Mammary epithelial cell (primary cell): ENCODE measurements at regions of chr9 and their contacts with region 1.

Region 1: GRCh38 chr9:94076557-94076956 is 7.7 kb upstream of the PTPDC1 start:
- DNase-seq: no peak
- H3K4me3 ChIP-seq: no peak overlapping the region
- H3K27ac ChIP-seq: no peak overlapping the region
- H3K4me1 ChIP-seq: no peaks in the 10 kb centered on the region
- H3K27me3 ChIP-seq: no peaks in the 10 kb centered on the region
- CTCF ChIP-seq: no peak

Region 2: DNA sequence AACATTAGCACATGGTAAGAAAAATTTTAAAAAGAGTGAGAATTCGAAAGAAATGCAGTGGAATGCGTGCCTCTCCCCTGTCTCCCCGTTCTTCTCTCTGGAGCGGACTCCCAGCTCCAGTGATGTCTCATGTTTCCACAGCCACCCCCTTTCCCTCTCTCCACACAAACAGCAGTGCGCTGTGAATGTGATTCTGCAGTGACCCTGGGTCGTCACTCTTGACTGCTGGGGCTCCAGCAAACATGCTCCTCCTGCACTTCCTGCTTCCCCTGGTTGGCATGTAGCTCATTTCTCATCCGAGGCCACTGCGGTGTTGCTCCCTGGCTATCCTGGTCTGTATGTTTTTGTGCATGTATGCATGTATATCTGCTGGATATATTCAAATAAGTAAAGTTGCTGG is 486.9 kb before region 1 on chr9:
- CTCF ChIA-PET with region 1: no interaction called
- dilution Hi-C with region 1: no loop called
- in situ Hi-C with region 1: no loop called
- intact Hi-C with region 1: no loop called
- DNase-seq: no peak
- H3K4me3 ChIP-seq: no peak overlapping the region
- H3K27ac ChIP-seq: no peak overlapping the region
- H3K4me1 ChIP-seq: peaks cover 9% of the 10 kb centered on the region
- H3K27me3 ChIP-seq: no peaks in the 10 kb centered on the region
- CTCF ChIP-seq: no peak

Region 3: GRCh38 chr9:94042516-94043360 is 33.8 kb before region 1 on chr9:
- CTCF ChIA-PET with region 1: no interaction called
- dilution Hi-C with region 1: no loop called
- in situ Hi-C with region 1: no loop called
- intact Hi-C with region 1: no loop called
- DNase-seq: no peak
- H3K4me3 ChIP-seq: no peak overlapping the region
- H3K27ac ChIP-seq: no peak overlapping the region
- H3K4me1 ChIP-seq: no peaks in the 10 kb centered on the region
- H3K27me3 ChIP-seq: no peaks in the 10 kb centered on the region
- CTCF ChIP-seq: no peak

Region 4: DNA sequence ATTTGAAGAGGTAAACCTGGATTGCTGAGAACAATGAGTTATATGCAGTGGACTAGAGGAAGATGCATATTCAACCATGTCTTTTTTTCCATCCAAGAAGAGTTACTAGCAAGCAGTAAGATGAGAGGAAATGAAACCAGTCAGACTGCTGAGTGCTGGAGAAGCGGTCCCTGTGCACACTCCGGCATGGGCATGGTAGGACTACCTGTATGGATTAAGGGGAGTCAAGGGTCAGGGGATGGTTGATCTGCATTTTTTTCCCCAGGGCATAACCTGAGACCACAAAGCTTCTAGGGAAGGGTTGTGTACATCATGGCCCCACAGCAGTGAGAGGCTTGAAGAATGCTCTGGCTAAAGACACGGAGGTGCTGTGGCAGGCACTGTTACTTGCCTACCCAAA is 106.0 kb after region 1 on chr9:
- CTCF ChIA-PET with region 1: no interaction called
- dilution Hi-C with region 1: no loop called
- in situ Hi-C with region 1: loop called in 1 of 2 experiments (anchors 10 kb)
- intact Hi-C with region 1: no loop called
- DNase-seq: no peak
- H3K4me3 ChIP-seq: no peak overlapping the region
- H3K27ac ChIP-seq: no peak overlapping the region
- H3K4me1 ChIP-seq: no peaks in the 10 kb centered on the region
- H3K27me3 ChIP-seq: no peaks in the 10 kb centered on the region
- CTCF ChIP-seq: no peak